ENCODE measurements at regions of chr16 and their contacts with region 1.

Region 1: DNA sequence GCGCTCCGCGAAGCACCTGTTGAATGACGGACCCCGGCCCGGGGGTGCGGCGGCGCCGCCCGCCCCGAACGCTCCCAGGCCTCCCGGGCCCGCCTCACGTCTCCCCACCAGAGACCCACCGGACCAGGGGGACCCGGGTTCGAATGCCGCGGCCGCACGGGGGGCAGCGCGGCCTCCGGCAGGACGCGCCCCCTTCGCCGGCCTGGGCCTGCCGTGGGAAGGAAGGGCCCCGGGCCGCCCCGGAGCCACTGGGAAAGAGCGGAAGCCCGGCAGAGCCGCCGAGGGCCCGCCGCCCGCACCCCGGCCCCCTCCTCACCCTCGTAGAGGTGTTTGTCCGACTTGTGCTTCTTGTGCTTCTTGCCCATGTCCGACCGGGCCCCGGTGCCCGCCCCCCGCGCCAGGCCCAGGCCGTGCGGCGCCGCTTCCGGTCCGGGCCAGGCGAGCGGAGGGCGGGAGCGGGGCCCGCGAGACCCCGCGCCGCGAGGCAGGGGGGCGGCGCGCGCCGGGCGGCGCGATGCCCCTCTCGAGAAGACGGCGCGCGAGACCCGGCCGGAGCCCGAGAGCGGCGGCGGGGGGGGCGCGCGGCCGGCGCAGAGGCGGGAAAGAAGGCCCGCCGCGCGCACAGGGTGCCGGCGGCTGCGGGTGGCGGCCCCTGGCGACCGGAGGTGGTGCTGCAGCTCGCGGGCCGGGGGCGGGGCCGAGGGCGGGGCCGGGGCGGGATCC is at the start of gene BRD7:
- DNase-seq: peak; percentile 58 to 77 (median 66)
- H3K4me3 ChIP-seq: peak within 1 kb of the TSS; percentile 57 to 59
- H3K4me3 Mint-ChIP-seq: peak within 1 kb of the TSS; percentile 89 to 96 (median 92)
- H3K27ac ChIP-seq: peak within 1 kb of the TSS; percentile 70
- H3K27ac Mint-ChIP-seq: peak within 1 kb of the TSS; percentile 83 to 99 (median 96)
- H3K4me1 ChIP-seq: peaks cover 53% of the 10 kb centered on the region
- H3K4me1 Mint-ChIP-seq: peaks cover 38 to 58% (median 46%) of the 10 kb centered on the region in 4 donors
- H3K27me3 ChIP-seq: no peaks in the 10 kb centered on the region
- H3K27me3 Mint-ChIP-seq: peaks cover 0 to 1% of the 10 kb centered on the region in 2 donors
- total RNA-seq, gene BRD7: 86.6 to 97.7 TPM

Region 2: GRCh38 chr16:50065624-50066481 is 302.7 kb before region 1 on chr16 and contains the start of gene HEATR3:
- CTCF ChIA-PET with region 1: no interaction called
- POLR2A ChIA-PET with region 1: interaction called, 4 read pairs
- intact Hi-C with region 1: loop called (anchors 5 kb)
- DNase-seq: peak; percentile 89 to 92 (median 91)
- H3K4me3 ChIP-seq: peak within 1 kb of the TSS; percentile 82 to 98
- H3K4me3 Mint-ChIP-seq: peak within 1 kb of the TSS; percentile 90 to 97 (median 93)
- H3K27ac ChIP-seq: peak within 1 kb of the TSS; percentile 79
- H3K27ac Mint-ChIP-seq: peak within 1 kb of the TSS; percentile 77 to 96 (median 94)
- H3K4me1 ChIP-seq: peaks cover 33% of the 10 kb centered on the region
- H3K4me1 Mint-ChIP-seq: peaks cover 28 to 47% (median 35%) of the 10 kb centered on the region in 4 donors
- H3K27me3 ChIP-seq: no peaks in the 10 kb centered on the region
- H3K27me3 Mint-ChIP-seq: no peaks in the 10 kb centered on the region
- total RNA-seq, gene HEATR3: 20.5 to 25.6 TPM

Region 3: GRCh38 chr16:50245417-50246298 is 122.9 kb before region 1 on chr16:
- CTCF ChIA-PET with region 1: no interaction called
- POLR2A ChIA-PET with region 1: no interaction called
- intact Hi-C with region 1: no loop called
- DNase-seq: peak; percentile 25 to 46 (median 30)
- H3K4me3 ChIP-seq: peak overlapping the region in 1 of 2 donors; percentile 0
- H3K4me3 Mint-ChIP-seq: peak overlapping the region; percentile 67 to 84 (median 80)
- H3K27ac ChIP-seq: no peak overlapping the region
- H3K27ac Mint-ChIP-seq: peak overlapping the region in 3 of 7 donors; percentile 15 to 55 (median 38)
- H3K4me1 ChIP-seq: peaks cover 15% of the 10 kb centered on the region
- H3K4me1 Mint-ChIP-seq: peaks cover 0 to 8% (median 6%) of the 10 kb centered on the region in 4 donors
- H3K27me3 ChIP-seq: no peaks in the 10 kb centered on the region
- H3K27me3 Mint-ChIP-seq: no peaks in the 10 kb centered on the region

Region 4: GRCh38 chr16:50338371-50339231 is 30.0 kb before region 1 on chr16:
- CTCF ChIA-PET with region 1: interaction called, 628 read pairs
- POLR2A ChIA-PET with region 1: interaction called, 11 read pairs
- intact Hi-C with region 1: no loop called
- DNase-seq: peak; percentile 51 to 86 (median 73)
- H3K4me3 ChIP-seq: no peak overlapping the region
- H3K4me3 Mint-ChIP-seq: peak overlapping the region; percentile 2 to 72 (median 49)
- H3K27ac ChIP-seq: peak overlapping the region; percentile 79
- H3K27ac Mint-ChIP-seq: peak overlapping the region; percentile 88 to 99 (median 95)
- H3K4me1 ChIP-seq: peaks cover 34% of the 10 kb centered on the region
- H3K4me1 Mint-ChIP-seq: peaks cover 25 to 61% (median 44%) of the 10 kb centered on the region in 4 donors
- H3K27me3 ChIP-seq: no peaks in the 10 kb centered on the region
- H3K27me3 Mint-ChIP-seq: no peaks in the 10 kb centered on the region

Region 5: DNA sequence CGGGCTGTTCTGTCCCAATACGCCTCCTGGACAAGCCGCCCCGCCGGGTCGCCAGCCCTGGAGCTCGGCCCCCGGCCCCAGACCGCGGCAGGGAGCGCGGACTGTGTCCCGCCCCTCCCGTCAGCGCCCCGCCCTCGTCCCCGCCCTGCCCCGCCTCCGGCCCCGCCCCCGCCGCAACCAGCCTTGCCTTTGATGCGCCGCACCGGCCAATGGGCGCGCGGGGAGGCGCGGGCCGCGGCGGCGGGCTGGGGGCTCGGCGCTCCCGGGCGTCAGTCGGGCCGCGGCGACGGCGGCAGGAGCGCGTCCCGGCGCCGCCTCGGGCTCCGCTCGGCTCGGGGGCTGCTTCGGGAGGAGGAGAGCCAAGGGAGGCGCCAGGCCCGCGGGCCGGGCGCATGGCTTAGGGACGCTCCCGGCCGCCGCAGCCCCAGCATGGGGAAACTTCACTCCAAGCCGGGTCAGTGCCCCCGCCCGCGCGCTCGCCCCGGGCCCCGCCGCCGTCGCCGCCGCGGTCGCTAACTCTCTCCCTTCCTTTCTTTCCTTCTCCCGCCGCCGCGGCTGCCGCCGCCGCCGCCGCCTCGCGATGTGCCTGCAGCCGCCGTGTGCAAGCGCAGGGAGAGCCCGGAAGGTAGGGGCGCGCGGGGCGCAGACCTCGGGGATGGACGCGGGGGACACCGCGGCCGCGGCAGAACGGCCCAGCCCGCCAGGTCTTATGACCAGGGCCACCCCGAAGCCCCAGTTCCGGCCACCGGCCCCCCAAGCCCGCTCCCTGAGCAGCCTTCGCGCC is 179.7 kb after region 1 on chr16 and contains the start of gene NKD1:
- CTCF ChIA-PET with region 1: no interaction called
- POLR2A ChIA-PET with region 1: no interaction called
- intact Hi-C with region 1: loop called (anchors 2 kb)
- DNase-seq: peak; percentile 64 to 78 (median 69)
- H3K4me3 ChIP-seq: peak within 1 kb of the TSS in 1 of 2 donors; percentile 68
- H3K4me3 Mint-ChIP-seq: peak within 1 kb of the TSS; percentile 81 to 89 (median 88)
- H3K27ac ChIP-seq: peak within 1 kb of the TSS; percentile 43
- H3K27ac Mint-ChIP-seq: peak within 1 kb of the TSS; percentile 90 to 96 (median 95)
- H3K4me1 ChIP-seq: peaks cover 30% of the 10 kb centered on the region
- H3K4me1 Mint-ChIP-seq: peaks cover 14 to 35% (median 25%) of the 10 kb centered on the region in 4 donors
- H3K27me3 ChIP-seq: no peaks in the 10 kb centered on the region
- H3K27me3 Mint-ChIP-seq: no peaks in the 10 kb centered on the region
- total RNA-seq, gene NKD1: 3.8 to 4.6 TPM